ENCODE measurements at regions of chr1 and their contacts with region 1.

Region 1: GRCh38 chr1:43073490-43074230 is 98.4 kb downstream of the EBNA1BP2 start:
- DNase-seq: no peak
- H3K4me3 ChIP-seq: no peak overlapping the region
- CTCF ChIP-seq: peak; percentile 71

Region 2: DNA sequence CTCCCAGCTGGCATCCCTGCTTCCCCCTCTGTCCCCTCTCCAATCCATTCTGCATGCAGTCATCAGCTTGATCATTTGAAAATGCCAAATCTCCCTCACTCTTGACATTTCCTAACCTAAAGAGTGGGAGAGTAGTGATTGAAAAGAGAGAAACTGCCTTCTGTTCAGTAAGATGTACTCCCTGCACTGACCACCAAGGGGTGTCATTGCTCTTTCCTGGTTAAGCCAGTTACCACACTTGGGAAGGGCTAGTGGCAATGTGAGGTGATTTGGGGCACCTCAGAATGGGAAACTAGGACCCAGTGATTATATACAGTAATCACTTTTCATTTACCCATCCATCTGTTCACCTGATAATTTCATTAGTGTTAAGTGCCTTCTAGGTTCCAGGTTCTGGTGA is 295.8 kb before region 1 on chr1:
- CTCF ChIA-PET with region 1: interaction called, 128 read pairs
- POLR2A ChIA-PET with region 1: no interaction called
- DNase-seq: no peak
- H3K4me3 ChIP-seq: no peak overlapping the region
- CTCF ChIP-seq: peak; percentile 68

Region 3: GRCh38 chr1:42904434-42904833 is 169.2 kb before region 1 on chr1:
- CTCF ChIA-PET with region 1: interaction called, 10 read pairs
- POLR2A ChIA-PET with region 1: no interaction called
- DNase-seq: no peak
- H3K4me3 ChIP-seq: no peak overlapping the region
- CTCF ChIP-seq: no peak

Region 4: DNA sequence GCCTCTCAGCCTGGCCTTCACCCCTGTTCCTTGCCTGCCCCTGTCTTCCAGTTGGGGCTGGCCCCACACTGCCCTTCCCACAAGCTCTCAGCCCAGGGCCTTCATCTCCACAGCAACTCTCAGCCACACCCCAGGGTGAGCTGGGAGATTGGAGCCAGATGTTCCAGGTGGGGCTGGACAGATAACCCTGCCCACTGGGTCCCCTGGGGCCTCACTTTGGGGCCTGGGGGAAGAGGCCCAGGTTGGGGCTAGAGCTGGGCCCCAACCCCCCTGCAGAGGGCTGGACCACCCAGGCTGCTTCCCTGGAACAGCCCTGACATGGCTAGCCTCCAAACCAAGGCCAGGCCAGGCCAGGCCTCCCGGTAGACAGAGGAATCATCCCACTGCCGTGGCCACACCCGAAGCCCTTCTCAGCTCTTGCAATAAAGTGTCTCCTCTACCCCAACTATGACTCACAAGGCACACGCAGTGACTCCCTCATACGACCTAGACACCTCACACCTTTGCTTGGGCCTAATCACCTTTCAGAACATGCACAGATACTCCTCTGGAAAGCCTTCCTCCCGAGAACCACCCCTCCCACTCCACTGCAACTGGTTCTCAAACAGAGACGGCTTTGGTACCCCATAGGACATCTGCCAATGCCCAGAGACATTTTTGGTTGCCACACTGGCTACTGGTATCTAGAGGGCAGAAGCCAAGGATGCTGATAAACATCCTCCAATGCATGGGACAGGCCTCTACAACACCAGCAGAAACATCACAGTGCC is 137.2 kb before region 1 on chr1:
- CTCF ChIA-PET with region 1: interaction called, 34 read pairs
- POLR2A ChIA-PET with region 1: no interaction called
- DNase-seq: no peak
- H3K4me3 ChIP-seq: no peak overlapping the region
- CTCF ChIP-seq: no peak

Region 5: GRCh38 chr1:42957577-42958487 is 115.8 kb before region 1 on chr1:
- CTCF ChIA-PET with region 1: interaction called, 44 read pairs
- POLR2A ChIA-PET with region 1: interaction called, 3 read pairs
- DNase-seq: no peak
- H3K4me3 ChIP-seq: peak overlapping the region; percentile 88
- CTCF ChIP-seq: no peak

Region 6: DNA sequence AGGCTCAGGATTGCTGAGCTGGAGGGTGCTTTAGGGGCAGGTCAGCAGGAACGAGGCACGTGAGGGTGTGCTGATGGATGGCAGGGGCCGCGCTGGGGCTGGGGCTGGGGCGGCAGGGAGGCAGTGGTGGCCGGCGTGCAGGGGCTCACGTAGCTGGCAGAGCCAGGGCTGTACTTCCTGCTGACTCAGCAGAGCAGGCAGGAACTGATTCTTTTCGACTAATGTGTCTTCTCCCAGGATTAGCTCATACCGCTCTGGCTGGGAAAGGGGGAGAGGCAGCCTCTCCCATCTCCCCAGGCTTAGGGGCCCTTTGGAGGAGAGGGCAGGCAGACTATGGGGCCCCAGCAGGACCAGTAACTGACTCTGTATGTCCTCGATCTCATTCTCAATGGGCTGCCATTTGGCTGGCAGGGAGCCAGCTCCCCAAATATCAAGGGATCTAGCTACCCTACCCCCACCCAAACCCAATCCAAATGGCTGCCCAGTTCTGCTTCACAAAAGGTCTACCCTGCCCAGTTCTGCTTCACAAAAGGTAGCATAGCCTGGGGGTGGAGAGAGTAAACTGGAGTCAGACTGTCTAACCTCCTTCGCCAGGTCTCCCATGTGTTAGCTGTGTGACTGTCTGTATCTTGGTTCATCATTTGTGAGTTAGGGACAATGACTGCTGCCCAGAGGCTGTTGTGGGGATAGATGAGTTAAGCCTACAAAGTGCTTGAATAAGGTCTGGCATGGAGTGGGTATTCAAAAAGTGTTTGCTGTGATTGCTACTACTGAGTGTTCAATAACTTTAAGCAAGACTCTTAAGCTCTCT is 14.9 kb before region 1 on chr1:
- CTCF ChIA-PET with region 1: interaction called, 86 read pairs
- POLR2A ChIA-PET with region 1: no interaction called
- DNase-seq: no peak
- H3K4me3 ChIP-seq: no peak overlapping the region
- CTCF ChIP-seq: no peak

Region 7: DNA sequence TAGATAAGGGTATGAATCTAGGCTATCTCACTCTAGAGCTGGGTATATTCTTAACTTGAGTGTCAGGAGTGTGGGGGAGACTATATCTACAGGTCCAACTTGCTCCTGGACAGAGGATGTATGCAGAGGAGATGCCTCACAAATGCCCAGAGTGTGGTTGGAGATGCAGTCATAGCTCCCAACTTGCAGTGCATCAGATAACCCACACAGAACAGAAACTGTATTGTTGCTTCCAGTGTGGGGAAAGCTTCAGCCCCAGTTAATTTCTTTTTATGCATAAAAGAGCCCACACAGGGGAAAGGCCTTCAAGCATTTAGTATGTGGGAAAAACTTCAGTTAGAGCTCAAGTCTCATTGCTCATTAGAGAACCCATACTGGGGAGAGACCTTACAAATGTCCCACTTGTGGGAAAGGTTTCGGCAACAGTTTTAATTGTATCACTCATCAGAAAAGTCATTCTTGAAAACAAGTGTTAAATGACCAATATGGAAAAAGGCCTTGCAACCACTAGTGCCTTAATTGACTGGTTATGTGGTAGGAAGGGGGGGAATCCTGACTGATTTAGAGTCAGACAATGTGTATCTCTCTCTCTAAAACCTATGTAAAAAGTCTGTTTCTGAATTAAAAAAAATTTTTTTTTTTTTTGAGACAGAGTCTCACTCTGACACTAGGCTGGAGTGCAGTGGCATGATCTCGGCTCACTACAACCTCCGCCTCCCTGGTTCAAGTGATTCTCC is 30.5 kb after region 1 on chr1:
- CTCF ChIA-PET with region 1: no interaction called
- POLR2A ChIA-PET with region 1: no interaction called
- DNase-seq: no peak
- H3K4me3 ChIP-seq: no peak overlapping the region
- CTCF ChIP-seq: no peak

Region 8: DNA sequence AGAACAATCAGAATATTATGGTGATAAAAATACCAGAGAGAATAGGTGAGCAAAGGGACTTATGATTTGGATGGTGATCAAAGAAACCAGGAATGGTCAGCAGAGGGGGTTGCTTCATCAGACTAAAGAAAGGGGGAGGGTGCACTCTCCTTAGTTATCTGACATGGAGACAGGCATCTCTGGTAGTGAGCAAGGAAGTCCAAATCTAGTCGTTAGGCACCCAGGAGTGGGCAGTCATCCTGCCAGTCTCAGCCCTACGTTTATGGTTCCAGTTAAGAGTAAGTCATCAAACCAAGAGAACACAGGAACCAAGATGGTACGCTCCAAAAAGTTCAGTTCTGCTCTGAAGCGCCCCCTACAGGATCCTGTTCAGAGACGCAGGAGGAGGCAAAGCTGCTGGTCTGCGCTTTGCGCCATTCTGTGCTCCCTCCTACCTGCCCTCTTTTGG is 69.8 kb after region 1 on chr1:
- CTCF ChIA-PET with region 1: no interaction called
- POLR2A ChIA-PET with region 1: no interaction called
- DNase-seq: no peak
- H3K4me3 ChIP-seq: no peak overlapping the region
- CTCF ChIP-seq: peak; percentile 0